Activated B cell treated with CpG ODN at 0.5 μM for 24 hours (primary cell): ENCODE measurements at regions of chr3 and their contacts with region 1.

Region 1: DNA sequence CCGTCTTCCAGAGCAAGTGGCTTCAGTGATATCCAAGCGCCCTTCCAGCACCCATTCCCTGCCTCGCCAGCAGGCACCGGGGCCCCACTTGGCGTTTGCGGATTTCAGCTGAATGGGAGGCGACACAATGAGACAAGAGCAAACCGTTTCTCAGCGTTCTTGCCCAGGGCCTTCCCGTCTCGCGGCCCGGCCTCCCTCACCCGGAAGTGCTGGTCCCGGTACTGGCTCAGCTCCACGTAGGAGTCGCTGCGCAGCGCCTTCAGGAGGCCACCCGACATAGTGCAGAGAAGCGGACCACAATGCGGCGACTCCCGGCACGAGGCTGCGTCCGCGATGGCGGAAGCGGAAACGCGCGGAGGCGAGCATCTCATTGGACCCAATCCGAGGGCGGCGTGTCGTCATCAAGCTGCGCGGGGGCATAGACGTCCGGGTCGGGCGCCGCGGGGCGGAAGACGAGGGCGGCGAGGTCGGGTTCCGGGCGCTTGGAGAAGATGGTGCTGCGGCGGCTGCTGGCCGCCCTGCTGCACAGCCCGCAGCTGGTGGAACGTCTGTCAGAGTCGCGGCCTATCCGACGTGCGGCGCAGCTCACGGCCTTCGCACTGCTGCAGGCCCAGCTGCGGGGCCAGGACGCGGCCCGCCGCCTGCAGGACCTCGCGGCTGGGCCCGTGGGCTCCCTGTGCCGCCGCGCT is at the start of gene NCBP2:
- DNase-seq: peak; percentile 99
- ATAC-seq: peak; percentile 91
- H3K4me3 Mint-ChIP-seq: peak within 1 kb of the TSS; percentile 95
- H3K27ac Mint-ChIP-seq: peak within 1 kb of the TSS; percentile 95
- H3K4me1 Mint-ChIP-seq: peaks cover 57% of the 10 kb centered on the region
- H3K27me3 Mint-ChIP-seq: no peaks in the 10 kb centered on the region
- CTCF ChIP-seq: no peak
- total RNA-seq, gene NCBP2: 77.8 and 85.1 TPM in 2 replicates

Region 2: DNA sequence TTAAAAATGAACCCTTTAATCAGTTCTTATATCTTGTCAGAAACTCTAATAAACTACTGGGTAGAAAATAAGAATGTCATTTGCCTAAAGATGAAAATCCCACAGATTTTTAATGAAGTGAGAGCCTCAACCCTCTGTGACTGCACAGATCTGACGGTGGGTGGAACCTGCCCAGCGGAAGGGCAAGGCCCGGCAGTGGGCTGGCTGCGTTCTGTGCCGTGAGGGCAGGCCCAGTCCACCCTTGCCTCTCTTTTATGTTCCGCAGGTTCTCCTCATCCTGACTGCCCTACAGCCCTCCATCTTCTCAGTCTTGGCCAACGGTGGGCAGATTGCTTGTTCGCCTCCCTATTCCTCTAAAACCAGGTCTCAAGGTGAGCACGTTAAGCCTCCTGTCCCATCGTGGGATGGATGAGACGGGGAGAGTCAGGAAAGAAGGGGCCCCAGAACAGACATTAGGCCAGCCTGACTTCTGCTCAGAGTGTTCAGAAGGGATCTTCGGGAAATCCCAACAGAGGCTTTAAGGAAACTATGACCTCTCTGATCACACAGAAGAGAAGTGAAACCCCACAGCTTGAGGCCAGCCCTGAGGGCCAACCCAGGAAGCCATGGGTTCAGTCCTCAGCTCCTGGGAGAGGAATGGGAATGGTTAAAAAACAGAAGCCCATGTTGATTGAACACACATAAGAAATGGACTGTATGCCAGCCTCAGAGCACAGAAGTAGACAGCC is 710.1 kb before region 1 on chr3:
- CTCF ChIA-PET with region 1: no interaction called
- POLR2A ChIA-PET with region 1: no interaction called
- intact Hi-C with region 1: no loop called
- DNase-seq: no peak
- ATAC-seq: peak; percentile 40
- H3K4me3 Mint-ChIP-seq: no peak overlapping the region
- H3K27ac Mint-ChIP-seq: no peak overlapping the region
- H3K4me1 Mint-ChIP-seq: peaks cover 14% of the 10 kb centered on the region
- H3K27me3 Mint-ChIP-seq: no peaks in the 10 kb centered on the region
- CTCF ChIP-seq: no peak

Region 3: GRCh38 chr3:196609343-196609775 is 333.0 kb before region 1 on chr3:
- CTCF ChIA-PET with region 1: no interaction called
- POLR2A ChIA-PET with region 1: interaction called, 7 read pairs
- intact Hi-C with region 1: loop called (anchors 1 kb)
- DNase-seq: peak; percentile 89
- ATAC-seq: peak; percentile 96
- H3K4me3 Mint-ChIP-seq: peak overlapping the region; percentile 52
- H3K27ac Mint-ChIP-seq: peak overlapping the region; percentile 69
- H3K4me1 Mint-ChIP-seq: peaks cover 20% of the 10 kb centered on the region
- H3K27me3 Mint-ChIP-seq: no peaks in the 10 kb centered on the region
- CTCF ChIP-seq: peak; percentile 52

Region 4: GRCh38 chr3:196739671-196740480 is 202.5 kb before region 1 on chr3 and contains the start of gene PAK2:
- CTCF ChIA-PET with region 1: interaction called, 3 read pairs
- POLR2A ChIA-PET with region 1: interaction called, 22 read pairs
- intact Hi-C with region 1: loop called (anchors 2 kb)
- DNase-seq: peak; percentile 86
- ATAC-seq: peak; percentile 92
- H3K4me3 Mint-ChIP-seq: peak within 1 kb of the TSS; percentile 100
- H3K27ac Mint-ChIP-seq: peak within 1 kb of the TSS; percentile 99
- H3K4me1 Mint-ChIP-seq: peaks cover 33% of the 10 kb centered on the region
- H3K27me3 Mint-ChIP-seq: no peaks in the 10 kb centered on the region
- CTCF ChIP-seq: no peak
- total RNA-seq, gene PAK2: 73.7 and 87.1 TPM in 2 replicates

Region 5: DNA sequence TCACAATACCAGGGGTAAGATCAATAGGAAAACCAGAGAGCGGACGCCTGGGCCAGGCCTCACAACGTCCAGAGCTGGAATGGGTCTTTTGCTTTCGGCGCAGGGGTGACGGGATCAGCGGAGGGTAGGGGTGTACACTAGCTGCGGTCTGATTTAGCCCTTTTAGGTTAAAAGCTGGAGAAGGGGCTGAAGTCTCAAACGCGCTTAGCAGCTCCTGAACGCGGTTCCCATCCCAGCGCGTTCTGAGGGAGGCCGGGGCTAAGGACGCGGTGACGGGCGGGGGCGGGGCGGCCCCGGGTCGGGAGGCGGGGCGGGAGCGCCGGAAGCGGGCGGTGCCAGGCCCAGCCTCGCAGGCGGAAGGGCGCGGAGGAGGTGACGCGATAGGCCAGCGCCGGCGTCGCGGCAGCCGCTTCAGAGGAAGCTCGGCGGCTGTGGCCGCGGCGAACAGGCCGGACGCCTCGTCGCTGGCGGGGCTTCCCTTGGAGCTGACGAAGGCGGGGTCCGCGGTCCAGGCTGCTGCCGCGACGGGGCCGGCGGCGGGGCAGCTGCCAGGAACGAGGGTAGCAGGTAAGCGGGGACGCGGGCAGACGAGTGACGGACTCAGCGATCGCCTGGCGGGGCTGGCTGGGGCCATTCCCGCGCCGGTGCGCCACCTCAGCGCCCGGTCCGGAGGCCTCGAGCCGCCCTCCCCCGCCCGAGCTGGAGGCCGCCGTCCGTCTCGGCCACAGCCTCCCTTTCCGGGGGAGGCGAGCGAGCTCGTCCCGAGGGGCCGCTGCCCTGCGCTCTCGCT is 74.7 kb before region 1 on chr3 and contains the start of gene SENP5:
- CTCF ChIA-PET with region 1: no interaction called
- POLR2A ChIA-PET with region 1: interaction called, 49 read pairs
- intact Hi-C with region 1: loop called (anchors 1 kb)
- DNase-seq: peak; percentile 87
- ATAC-seq: peak; percentile 97
- H3K4me3 Mint-ChIP-seq: peak within 1 kb of the TSS; percentile 93
- H3K27ac Mint-ChIP-seq: peak within 1 kb of the TSS; percentile 89
- H3K4me1 Mint-ChIP-seq: peaks cover 28% of the 10 kb centered on the region
- H3K27me3 Mint-ChIP-seq: no peaks in the 10 kb centered on the region
- CTCF ChIP-seq: no peak
- total RNA-seq, gene SENP5: 35.8 and 45.2 TPM in 2 replicates

Region 6: DNA sequence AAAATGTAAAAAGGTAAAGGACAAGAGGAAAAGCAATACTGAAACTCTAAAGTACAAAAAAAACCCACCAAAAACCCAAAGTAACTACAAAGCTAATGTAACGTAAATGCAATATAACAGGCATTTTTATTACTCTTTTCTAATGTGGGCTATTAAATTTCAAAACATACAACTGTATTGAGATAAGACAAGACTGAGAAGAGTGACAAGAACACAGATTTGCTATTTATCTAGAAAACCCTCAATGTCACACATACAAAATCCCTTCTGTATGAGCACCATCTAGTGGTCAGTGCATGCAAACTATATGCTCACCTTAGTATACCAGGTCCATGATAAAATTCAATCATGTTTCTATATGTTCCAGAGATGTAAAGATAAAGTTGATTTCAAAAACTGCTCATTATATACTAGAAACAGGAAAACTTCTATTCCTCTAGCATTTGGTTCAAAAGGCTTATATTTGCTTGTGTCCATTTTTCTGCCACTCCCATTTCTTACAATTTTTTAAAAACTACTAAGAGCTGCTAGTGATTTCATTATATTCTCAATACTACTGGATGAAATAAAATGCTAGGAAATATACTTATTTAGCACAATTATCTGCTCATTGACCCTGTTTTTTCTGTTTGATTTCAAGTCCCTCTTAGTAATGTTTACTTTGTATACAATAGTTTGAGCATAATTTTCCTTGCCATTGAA is 244.7 kb after region 1 on chr3:
- CTCF ChIA-PET with region 1: no interaction called
- POLR2A ChIA-PET with region 1: no interaction called
- intact Hi-C with region 1: loop called (anchors 1 kb)
- DNase-seq: no peak
- ATAC-seq: peak; percentile 61
- H3K4me3 Mint-ChIP-seq: no peak overlapping the region
- H3K27ac Mint-ChIP-seq: no peak overlapping the region
- H3K4me1 Mint-ChIP-seq: peaks cover 4% of the 10 kb centered on the region
- H3K27me3 Mint-ChIP-seq: no peaks in the 10 kb centered on the region
- CTCF ChIP-seq: no peak